Activated CD8-positive, alpha-beta memory T cell treated with anti-CD3 and anti-CD28 coated beads, Interleukin-2, amount 10 ng/mL, durations not matched to agents 7 days and 5 days (primary cell): ENCODE measurements at regions of chr1 and their contacts with region 1.

Region 1: DNA sequence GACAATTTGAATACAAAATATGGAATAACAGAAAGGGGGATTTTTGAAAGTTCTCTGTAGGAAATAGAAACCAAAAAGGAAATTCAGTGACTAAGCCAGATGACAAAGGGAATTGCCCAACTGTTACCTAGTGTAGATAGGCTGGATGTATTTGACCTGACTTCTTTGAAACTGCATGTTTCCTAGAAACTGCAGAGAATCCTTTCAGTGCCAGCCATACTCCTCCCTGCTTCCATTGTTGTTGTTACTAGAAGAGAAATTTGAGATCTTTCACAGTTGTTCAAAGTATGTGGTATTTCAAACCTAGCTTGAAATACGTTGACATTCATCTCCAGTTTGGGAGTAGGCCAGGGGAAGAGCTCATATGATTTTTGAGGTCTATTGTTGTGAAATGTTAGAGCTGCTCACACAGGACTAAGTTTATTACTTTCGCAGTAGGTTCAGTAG is 1.8 kb upstream of the GBP5 start:
- DNase-seq: no peak
- ATAC-seq: peak; percentile 21
- H3K4me3 Mint-ChIP-seq: peak overlapping the region; percentile 72
- H3K27ac Mint-ChIP-seq: peak overlapping the region; percentile 95
- H3K4me1 Mint-ChIP-seq: peaks cover 62% of the 10 kb centered on the region
- H3K27me3 Mint-ChIP-seq: no peaks in the 10 kb centered on the region

Region 2: GRCh38 chr1:89085781-89086180 is 188.7 kb before region 1 on chr1:
- CTCF ChIA-PET with region 1: interaction called, 12 read pairs
- DNase-seq: peak; percentile 56
- ATAC-seq: peak; percentile 64
- H3K4me3 Mint-ChIP-seq: no peak overlapping the region
- H3K27ac Mint-ChIP-seq: no peak overlapping the region
- H3K4me1 Mint-ChIP-seq: peaks cover 7% of the 10 kb centered on the region
- H3K27me3 Mint-ChIP-seq: no peaks in the 10 kb centered on the region

Region 3: GRCh38 chr1:89198491-89199072 is 75.9 kb before region 1 on chr1 and contains the start of gene GBP4:
- CTCF ChIA-PET with region 1: interaction called, 12 read pairs
- DNase-seq: peak; percentile 67
- ATAC-seq: peak; percentile 76
- H3K4me3 Mint-ChIP-seq: peak within 1 kb of the TSS; percentile 97
- H3K27ac Mint-ChIP-seq: peak within 1 kb of the TSS; percentile 99
- H3K4me1 Mint-ChIP-seq: peaks cover 58% of the 10 kb centered on the region
- H3K27me3 Mint-ChIP-seq: no peaks in the 10 kb centered on the region
- total RNA-seq, gene GBP4: 69.7 to 78.6 TPM

Region 4: DNA sequence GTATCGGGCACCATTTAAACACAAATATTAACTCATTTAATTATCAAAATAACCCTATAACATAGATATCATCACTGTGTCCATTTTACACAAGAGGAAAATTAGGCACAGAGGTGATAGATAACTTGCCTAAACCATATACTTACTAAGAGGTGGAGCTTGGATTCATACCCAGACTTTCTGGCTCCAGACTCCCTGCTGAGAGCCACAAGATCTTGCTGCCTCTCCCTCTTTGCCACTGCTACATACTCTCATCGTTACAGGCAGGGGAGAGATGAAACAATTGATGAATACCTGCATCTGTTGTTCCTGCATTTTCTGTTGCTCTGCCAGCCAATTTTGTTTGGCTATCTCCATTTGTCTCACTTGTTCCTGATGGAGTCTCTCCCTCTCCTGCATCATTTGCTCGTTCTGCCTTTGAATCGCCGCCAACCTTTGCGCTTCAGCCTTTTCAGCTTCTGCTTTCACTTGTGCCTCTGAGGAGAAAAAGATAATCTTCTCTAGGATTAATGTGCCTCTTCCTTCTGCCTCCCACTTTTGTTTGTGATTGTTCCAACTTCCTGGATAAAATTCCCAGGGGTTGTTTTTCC is 12.4 kb before region 1 on chr1:
- CTCF ChIA-PET with region 1: interaction called, 31 read pairs
- DNase-seq: no peak
- ATAC-seq: no peak
- H3K4me3 Mint-ChIP-seq: peak overlapping the region; percentile 31
- H3K27ac Mint-ChIP-seq: peak overlapping the region; percentile 37
- H3K4me1 Mint-ChIP-seq: peaks cover 74% of the 10 kb centered on the region
- H3K27me3 Mint-ChIP-seq: no peaks in the 10 kb centered on the region

Region 5: GRCh38 chr1:89286549-89287180 is 12.2 kb after region 1 on chr1:
- CTCF ChIA-PET with region 1: interaction called, 37 read pairs
- DNase-seq: no peak
- ATAC-seq: peak; percentile 88
- H3K4me3 Mint-ChIP-seq: peak overlapping the region; percentile 27
- H3K27ac Mint-ChIP-seq: peak overlapping the region; percentile 97
- H3K4me1 Mint-ChIP-seq: peaks cover 74% of the 10 kb centered on the region
- H3K27me3 Mint-ChIP-seq: no peaks in the 10 kb centered on the region